GM10248 (cell line): ENCODE measurements at regions of chr6 and their contacts with region 1.

Region 1: GRCh38 chr6:163695414-163695864 is 280.9 kb downstream of the QKI start:
- DNase-seq: no peak
- CTCF ChIP-seq: no peak

Region 2: GRCh38 chr6:163707401-163708355 is 12.2 kb after region 1 on chr6:
- CTCF ChIA-PET with region 1: interaction called, 19 read pairs
- POLR2A ChIA-PET with region 1: interaction called, 3 read pairs
- DNase-seq: peak; percentile 57
- CTCF ChIP-seq: no peak